AG04450 (cell line): ENCODE measurements at regions of chr11 and their contacts with region 1.

Region 1: DNA sequence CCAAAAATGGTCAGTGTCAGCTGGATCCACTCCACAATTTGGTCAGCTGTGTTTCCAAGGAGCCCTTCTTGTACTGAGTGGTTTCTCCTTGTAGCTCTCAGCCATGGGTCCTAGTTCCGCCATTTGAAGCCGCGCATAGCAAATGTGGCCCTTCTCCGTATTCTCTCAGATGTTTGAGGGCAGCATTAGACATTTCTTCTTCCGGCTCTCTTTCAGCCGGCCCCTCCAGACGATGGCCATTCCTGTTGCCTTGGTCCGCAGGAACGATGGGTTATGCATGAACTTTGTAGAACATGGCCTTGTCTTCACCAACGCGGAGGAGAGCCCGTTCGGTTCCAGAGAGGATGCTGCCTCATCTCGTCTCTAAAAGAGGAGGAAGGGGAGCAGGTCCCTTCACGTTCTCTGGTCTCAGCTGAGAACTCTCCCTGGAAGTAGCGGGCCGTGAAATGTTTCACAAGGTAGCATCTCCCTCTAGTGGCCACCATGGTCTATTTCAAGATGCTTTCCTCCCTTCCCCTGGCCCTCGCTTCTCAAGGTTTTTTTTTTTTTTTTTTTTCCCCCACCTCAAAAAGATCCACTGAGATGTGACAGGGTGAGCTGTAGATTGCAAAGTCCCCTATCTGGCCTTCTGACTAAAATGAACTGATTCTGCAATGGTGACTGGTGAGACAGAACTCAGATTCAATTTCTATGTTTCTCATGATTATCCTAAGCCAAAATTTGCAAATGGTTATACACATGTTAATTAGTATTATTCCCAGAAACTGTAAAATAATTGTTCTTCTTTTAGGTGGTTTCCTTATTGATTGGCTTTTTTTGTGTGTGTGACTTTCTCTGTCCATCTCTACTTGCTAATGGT is 19.8 kb upstream of the PLET1 start:
- DNase-seq: peak; percentile 63
- H3K4me3 ChIP-seq: peak overlapping the region; percentile 55
- H3K27ac ChIP-seq: no peak overlapping the region
- H3K27me3 ChIP-seq: peaks cover 16% of the 10 kb centered on the region
- CTCF ChIP-seq: peak; percentile 81

Region 2: GRCh38 chr11:112113539-112114457 is 166.7 kb before region 1 on chr11:
- CTCF ChIA-PET with region 1: interaction called, 140 read pairs
- POLR2A ChIA-PET with region 1: no interaction called
- DNase-seq: no peak
- H3K4me3 ChIP-seq: no peak overlapping the region
- H3K27ac ChIP-seq: no peak overlapping the region
- H3K27me3 ChIP-seq: no peaks in the 10 kb centered on the region
- CTCF ChIP-seq: peak; percentile 77

Region 3: DNA sequence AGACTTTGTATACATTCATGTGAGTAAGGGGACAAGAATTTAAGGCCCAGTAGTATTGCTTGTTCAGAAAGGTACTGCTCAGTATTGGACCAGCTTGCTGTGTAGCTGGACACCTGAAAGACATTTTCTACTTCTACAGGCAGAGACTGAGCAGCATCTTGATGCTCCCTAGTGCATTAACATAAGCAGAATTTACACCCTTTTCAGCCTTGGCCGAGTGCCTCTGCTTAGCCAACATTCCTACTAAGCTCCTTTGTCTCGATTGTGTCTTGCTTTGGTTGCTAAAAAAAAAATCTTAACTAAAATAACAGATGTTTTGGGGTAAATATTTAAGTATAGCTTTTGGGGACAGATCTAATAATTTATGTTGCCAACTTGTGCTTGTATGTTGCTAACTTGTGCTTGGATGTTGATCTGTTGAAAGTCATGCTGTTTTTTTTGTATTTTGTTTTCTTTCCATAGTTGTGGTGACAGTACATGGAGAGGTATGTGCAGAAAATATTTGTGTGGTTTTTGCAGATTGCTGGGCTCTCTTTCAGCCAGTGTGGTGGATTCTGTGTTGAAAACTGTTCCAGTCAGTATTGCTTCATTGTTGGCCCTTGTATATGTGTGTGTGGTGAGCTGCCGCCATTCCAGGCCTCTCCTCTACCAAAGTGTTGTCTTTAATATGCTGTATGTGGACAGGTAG is 50.6 kb before region 1 on chr11:
- CTCF ChIA-PET with region 1: interaction called, 711 read pairs
- POLR2A ChIA-PET with region 1: interaction called, 5 read pairs
- DNase-seq: peak; percentile 65
- H3K4me3 ChIP-seq: no peak overlapping the region
- H3K27ac ChIP-seq: peak overlapping the region; percentile 40
- H3K27me3 ChIP-seq: no peaks in the 10 kb centered on the region
- CTCF ChIP-seq: no peak

Region 4: GRCh38 chr11:112265721-112266409 is 14.6 kb before region 1 on chr11:
- CTCF ChIA-PET with region 1: interaction called, 79 read pairs
- POLR2A ChIA-PET with region 1: no interaction called
- DNase-seq: no peak
- H3K4me3 ChIP-seq: no peak overlapping the region
- H3K27ac ChIP-seq: no peak overlapping the region
- H3K27me3 ChIP-seq: peaks cover under 1% of the 10 kb centered on the region
- CTCF ChIP-seq: no peak

Region 5: GRCh38 chr11:112364962-112365481 is 84.5 kb after region 1 on chr11:
- CTCF ChIA-PET with region 1: interaction called, 12 read pairs
- POLR2A ChIA-PET with region 1: no interaction called
- DNase-seq: peak; percentile 98
- H3K4me3 ChIP-seq: no peak overlapping the region
- H3K27ac ChIP-seq: peak overlapping the region; percentile 99
- H3K27me3 ChIP-seq: no peaks in the 10 kb centered on the region
- CTCF ChIP-seq: no peak

Region 6: DNA sequence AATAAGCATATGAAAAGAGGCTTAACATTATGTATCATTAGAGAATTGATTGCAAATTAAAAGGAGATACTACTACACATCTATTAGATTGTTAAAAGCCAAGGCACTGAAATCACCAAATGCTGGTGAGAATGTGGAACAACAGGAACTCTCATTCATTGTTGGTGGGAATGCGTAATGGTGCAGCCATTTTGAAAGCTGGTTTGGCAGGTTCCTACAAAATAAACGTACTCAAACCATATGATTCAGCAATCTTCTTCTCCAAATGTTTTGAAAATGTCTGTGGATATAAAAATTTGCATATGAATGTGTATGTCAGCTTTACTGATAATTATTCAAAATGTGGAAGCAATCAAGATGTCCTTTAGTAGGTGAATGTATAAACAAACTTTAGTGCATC is 156.6 kb after region 1 on chr11:
- CTCF ChIA-PET with region 1: no interaction called
- POLR2A ChIA-PET with region 1: no interaction called
- DNase-seq: no peak
- H3K4me3 ChIP-seq: no peak overlapping the region
- H3K27ac ChIP-seq: no peak overlapping the region
- H3K27me3 ChIP-seq: no peaks in the 10 kb centered on the region
- CTCF ChIP-seq: no peak

Region 7: DNA sequence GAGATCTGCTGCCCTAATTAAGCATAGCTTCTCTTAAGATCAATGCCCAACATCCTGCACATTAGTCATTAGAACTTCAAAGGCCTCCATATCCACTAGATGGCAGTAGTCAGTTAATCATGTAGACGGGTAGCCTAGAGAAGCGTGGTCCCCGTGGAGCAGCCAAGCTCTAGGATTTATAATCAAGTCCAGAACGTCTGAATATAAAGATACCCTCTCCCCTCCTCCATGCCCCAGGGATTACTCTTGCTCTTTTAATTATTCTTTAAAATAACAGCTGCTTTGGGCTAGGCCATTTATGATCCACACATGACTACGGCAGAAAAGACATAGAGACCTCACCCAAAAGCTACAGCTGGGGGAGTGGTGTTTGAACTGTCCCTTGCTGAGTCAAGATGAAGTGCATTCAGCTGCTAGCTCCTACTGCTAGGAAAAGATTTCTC is 307.8 kb after region 1 on chr11:
- CTCF ChIA-PET with region 1: interaction called, 14 read pairs
- POLR2A ChIA-PET with region 1: no interaction called
- DNase-seq: peak; percentile 54
- H3K4me3 ChIP-seq: no peak overlapping the region
- H3K27ac ChIP-seq: no peak overlapping the region
- H3K27me3 ChIP-seq: no peaks in the 10 kb centered on the region
- CTCF ChIP-seq: peak; percentile 67